ENCODE measurements at regions of chr18 and their contacts with region 1.

Region 1: DNA sequence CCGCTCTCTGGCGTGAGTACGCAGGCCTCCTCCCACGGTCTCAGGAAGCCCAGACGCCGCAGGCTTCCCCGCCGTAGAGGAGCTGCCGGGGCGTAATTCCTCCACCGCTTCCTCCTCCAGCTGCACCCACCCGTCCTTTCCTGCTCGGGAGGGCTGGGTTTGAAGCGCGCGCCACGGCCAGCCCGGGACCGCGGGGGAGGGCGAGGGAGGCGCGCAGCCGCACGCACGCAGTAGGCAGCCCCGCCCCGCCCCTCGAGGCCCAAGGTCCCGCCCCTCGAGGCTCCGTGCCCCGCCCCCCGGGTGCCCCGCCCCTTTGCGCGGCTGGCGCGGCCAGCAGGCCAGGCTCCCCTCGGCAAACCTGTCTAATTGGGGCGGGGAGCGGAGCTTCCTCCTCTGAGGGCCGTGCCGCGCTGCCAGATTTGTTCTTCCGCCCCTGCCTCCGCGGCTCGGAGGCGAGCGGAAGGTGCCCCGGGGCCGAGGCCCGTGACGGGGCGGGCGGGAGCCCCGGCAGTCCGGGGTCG is at the start of gene MALT1:
- DNase-seq: peak; percentile 88 to 98 (median 92)
- ATAC-seq: peak; percentile 95
- H3K4me3 ChIP-seq: peak within 1 kb of the TSS; percentile 95
- H3K4me3 Mint-ChIP-seq: peak within 1 kb of the TSS; percentile 93 to 98 (median 96)
- H3K27ac ChIP-seq: peak within 1 kb of the TSS; percentile 88
- H3K27ac Mint-ChIP-seq: peak within 1 kb of the TSS; percentile 92 to 96 (median 95)
- H3K4me1 ChIP-seq: peaks cover 26 to 34% of the 10 kb centered on the region in 2 donors
- H3K4me1 Mint-ChIP-seq: peaks cover 36 to 70% (median 58%) of the 10 kb centered on the region in 7 donors
- H3K27me3 ChIP-seq: no peaks in the 10 kb centered on the region
- H3K27me3 Mint-ChIP-seq: peaks cover 0 to 6% (median 0%) of the 10 kb centered on the region in 5 donors
- total RNA-seq, gene MALT1: 50.0 to 101 (median 80.0) TPM

Region 2: DNA sequence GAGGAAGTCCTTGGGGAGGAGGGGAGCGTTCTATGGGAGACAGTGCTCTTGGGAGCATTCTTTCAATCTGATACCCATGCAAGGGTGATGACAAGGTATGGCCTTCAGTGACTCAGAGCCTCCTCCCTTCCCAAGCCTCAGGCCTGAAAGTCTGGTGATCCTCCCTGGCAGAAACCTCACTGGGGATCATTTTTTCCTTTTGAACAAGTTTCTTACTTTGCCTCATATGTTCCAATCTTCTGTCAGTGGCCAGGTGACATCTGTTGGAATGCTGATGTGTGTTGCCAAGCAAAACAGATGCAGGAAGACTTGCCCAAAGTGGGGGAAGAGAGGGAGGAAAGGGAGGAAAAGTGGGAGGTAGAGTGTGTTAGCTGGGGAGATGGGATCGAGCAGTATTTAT is 402.3 kb before region 1 on chr18:
- CTCF ChIA-PET with region 1: no interaction called
- POLR2A ChIA-PET with region 1: no interaction called
- intact Hi-C with region 1: no loop called
- DNase-seq: no peak
- ATAC-seq: no peak
- H3K4me3 ChIP-seq: no peak overlapping the region
- H3K4me3 Mint-ChIP-seq: no peak overlapping the region
- H3K27ac ChIP-seq: no peak overlapping the region
- H3K27ac Mint-ChIP-seq: no peak overlapping the region
- H3K4me1 ChIP-seq: peaks cover 0 to 14% of the 10 kb centered on the region in 2 donors
- H3K4me1 Mint-ChIP-seq: peaks cover 8 to 20% (median 16%) of the 10 kb centered on the region in 7 donors
- H3K27me3 ChIP-seq: no peaks in the 10 kb centered on the region
- H3K27me3 Mint-ChIP-seq: peaks cover 0 to 7% (median 0%) of the 10 kb centered on the region in 5 donors

Region 3: DNA sequence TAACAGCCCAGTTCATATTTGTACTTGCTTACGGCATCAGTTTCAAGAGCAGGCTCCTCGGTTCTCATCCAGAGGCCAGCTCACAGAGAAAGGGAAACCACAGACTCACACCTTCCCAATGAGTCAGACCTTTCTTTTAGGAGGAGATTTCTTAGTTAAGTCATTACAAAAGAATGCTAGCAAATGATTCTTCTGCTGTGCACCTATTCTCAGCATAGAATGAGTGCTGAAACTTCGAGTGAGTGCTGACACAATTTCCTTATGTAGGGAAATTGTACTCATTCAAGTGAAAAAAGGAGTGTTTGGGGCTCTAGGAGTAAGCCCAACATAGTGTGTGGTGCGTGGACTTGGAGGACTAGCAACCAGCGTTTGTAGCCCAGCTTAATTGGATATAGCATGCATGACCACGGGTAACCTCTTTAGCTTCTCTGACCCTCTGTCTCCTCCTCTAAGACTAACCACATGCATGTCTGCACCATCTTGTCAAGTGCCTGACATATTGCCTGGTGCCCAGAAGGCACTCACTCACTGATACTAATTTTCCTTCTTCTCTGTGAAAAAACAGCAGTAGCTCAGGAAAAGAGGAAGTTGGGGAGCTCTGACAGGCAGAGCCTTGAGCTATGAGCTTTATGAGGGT is 129.3 kb before region 1 on chr18:
- CTCF ChIA-PET with region 1: no interaction called
- POLR2A ChIA-PET with region 1: interaction called, 4 read pairs
- intact Hi-C with region 1: loop called in 1 of 2 experiments (anchors 5 kb)
- DNase-seq: peak in 1 of 9 donors; percentile 52
- ATAC-seq: peak; percentile 79
- H3K4me3 ChIP-seq: no peak overlapping the region
- H3K4me3 Mint-ChIP-seq: peak overlapping the region in 1 of 10 donors; percentile 23
- H3K27ac ChIP-seq: no peak overlapping the region
- H3K27ac Mint-ChIP-seq: peak overlapping the region in 1 of 9 donors; percentile 29
- H3K4me1 ChIP-seq: peaks cover 7 to 14% of the 10 kb centered on the region in 2 donors
- H3K4me1 Mint-ChIP-seq: peaks cover 23 to 59% (median 40%) of the 10 kb centered on the region in 7 donors
- H3K27me3 ChIP-seq: no peaks in the 10 kb centered on the region
- H3K27me3 Mint-ChIP-seq: peaks cover 0 to 41% (median 0%) of the 10 kb centered on the region in 5 donors

Region 4: GRCh38 chr18:58624011-58624410 is 47.2 kb before region 1 on chr18:
- CTCF ChIA-PET with region 1: no interaction called
- POLR2A ChIA-PET with region 1: interaction called, 28 read pairs
- intact Hi-C with region 1: loop called in 1 of 2 experiments (anchors 1 kb)
- DNase-seq: no peak
- ATAC-seq: no peak
- H3K4me3 ChIP-seq: no peak overlapping the region
- H3K4me3 Mint-ChIP-seq: no peak overlapping the region
- H3K27ac ChIP-seq: no peak overlapping the region
- H3K27ac Mint-ChIP-seq: no peak overlapping the region
- H3K4me1 ChIP-seq: peaks cover 0 to 5% of the 10 kb centered on the region in 2 donors
- H3K4me1 Mint-ChIP-seq: peaks cover 5 to 30% (median 18%) of the 10 kb centered on the region in 7 donors
- H3K27me3 ChIP-seq: no peaks in the 10 kb centered on the region
- H3K27me3 Mint-ChIP-seq: peaks cover 0 to 37% (median 0%) of the 10 kb centered on the region in 5 donors

Region 5: GRCh38 chr18:58682429-58683069 is 11.4 kb after region 1 on chr18:
- CTCF ChIA-PET with region 1: interaction called, 5 read pairs
- POLR2A ChIA-PET with region 1: interaction called, 236 read pairs
- intact Hi-C with region 1: loop called (anchors 1 kb)
- DNase-seq: no peak
- ATAC-seq: no peak
- H3K4me3 ChIP-seq: no peak overlapping the region
- H3K4me3 Mint-ChIP-seq: peak overlapping the region in 1 of 10 donors; percentile 38
- H3K27ac ChIP-seq: no peak overlapping the region
- H3K27ac Mint-ChIP-seq: peak overlapping the region in 7 of 9 donors; percentile 11 to 95 (median 66)
- H3K4me1 ChIP-seq: peaks cover 21 to 49% of the 10 kb centered on the region in 2 donors
- H3K4me1 Mint-ChIP-seq: peaks cover 32 to 95% (median 88%) of the 10 kb centered on the region in 7 donors
- H3K27me3 ChIP-seq: no peaks in the 10 kb centered on the region
- H3K27me3 Mint-ChIP-seq: no peaks in the 10 kb centered on the region

Region 6: DNA sequence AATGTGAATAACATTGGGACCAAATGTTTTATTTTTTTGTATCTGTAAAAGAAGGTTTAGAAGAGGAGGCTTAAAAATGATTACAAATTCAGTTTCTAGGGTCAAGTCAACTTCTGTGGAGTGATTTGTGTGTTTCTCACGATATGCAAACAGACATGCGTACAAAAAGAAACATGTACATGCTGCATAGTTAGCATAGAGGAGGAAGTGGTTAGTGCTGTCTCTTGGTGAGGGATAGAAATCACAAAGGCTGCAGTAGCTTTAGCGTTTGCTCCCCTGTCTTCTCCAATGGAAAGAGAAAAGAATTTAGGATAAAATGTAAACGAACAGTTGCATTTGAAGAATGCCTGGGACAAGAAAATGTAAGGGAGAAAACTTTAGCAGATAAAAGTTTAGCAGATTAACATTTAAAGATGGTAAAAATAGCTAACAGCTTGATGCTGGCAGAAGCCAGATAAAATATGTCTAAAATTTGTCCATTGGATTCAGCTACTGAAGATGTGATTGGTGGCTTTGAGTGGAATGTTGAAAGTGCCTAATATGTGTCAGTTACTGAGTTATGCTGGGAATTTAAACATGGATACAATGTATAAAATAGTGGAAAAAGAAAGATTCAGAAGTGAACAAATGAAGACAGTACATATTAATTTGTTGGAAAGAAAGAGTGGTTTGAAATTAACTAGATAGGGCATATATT is 45.0 kb after region 1 on chr18:
- CTCF ChIA-PET with region 1: interaction called, 7 read pairs
- POLR2A ChIA-PET with region 1: interaction called, 27 read pairs
- intact Hi-C with region 1: loop called (anchors 1 kb)
- DNase-seq: peak in 7 of 9 donors; percentile 19 to 59 (median 44)
- ATAC-seq: peak; percentile 86
- H3K4me3 ChIP-seq: no peak overlapping the region
- H3K4me3 Mint-ChIP-seq: peak overlapping the region; percentile 63 to 92 (median 80)
- H3K27ac ChIP-seq: peak overlapping the region; percentile 44
- H3K27ac Mint-ChIP-seq: peak overlapping the region; percentile 77 to 94 (median 87)
- H3K4me1 ChIP-seq: peaks cover 25 to 32% of the 10 kb centered on the region in 2 donors
- H3K4me1 Mint-ChIP-seq: peaks cover 38 to 92% (median 76%) of the 10 kb centered on the region in 7 donors
- H3K27me3 ChIP-seq: no peaks in the 10 kb centered on the region
- H3K27me3 Mint-ChIP-seq: no peaks in the 10 kb centered on the region

Region 7: GRCh38 chr18:59358712-59359575 is 687.8 kb after region 1 on chr18 and contains the start of gene LMAN1:
- CTCF ChIA-PET with region 1: no interaction called
- POLR2A ChIA-PET with region 1: no interaction called
- intact Hi-C with region 1: loop called in 1 of 2 experiments (anchors 1 kb)
- DNase-seq: peak; percentile 73 to 98 (median 83)
- ATAC-seq: peak; percentile 97
- H3K4me3 ChIP-seq: peak within 1 kb of the TSS; percentile 81
- H3K4me3 Mint-ChIP-seq: peak within 1 kb of the TSS; percentile 88 to 99 (median 96)
- H3K27ac ChIP-seq: peak within 1 kb of the TSS; percentile 86
- H3K27ac Mint-ChIP-seq: peak within 1 kb of the TSS; percentile 90 to 98 (median 93)
- H3K4me1 ChIP-seq: peaks cover 3 to 20% of the 10 kb centered on the region in 2 donors
- H3K4me1 Mint-ChIP-seq: peaks cover 11 to 45% (median 39%) of the 10 kb centered on the region in 7 donors
- H3K27me3 ChIP-seq: no peaks in the 10 kb centered on the region
- H3K27me3 Mint-ChIP-seq: peaks cover 0 to 9% (median 0%) of the 10 kb centered on the region in 5 donors
- total RNA-seq, gene LMAN1: 34.6 to 120 (median 46.3) TPM